ENCODE measurements at regions of chr10 and their contacts with region 1.

Region 1: GRCh38 chr10:29512425-29512974 is 122.3 kb downstream of the SVIL start:
- DNase-seq: no peak
- H3K4me3 Mint-ChIP-seq: no peak overlapping the region
- H3K27ac Mint-ChIP-seq: no peak overlapping the region
- H3K4me1 Mint-ChIP-seq: no peaks in the 10 kb centered on the region
- H3K27me3 Mint-ChIP-seq: no peaks in the 10 kb centered on the region

Region 2: GRCh38 chr10:29555746-29556481 is 43.4 kb after region 1 on chr10:
- CTCF ChIA-PET with region 1: no interaction called
- DNase-seq: no peak
- H3K4me3 Mint-ChIP-seq: no peak overlapping the region
- H3K27ac Mint-ChIP-seq: no peak overlapping the region
- H3K4me1 Mint-ChIP-seq: peaks cover 18% of the 10 kb centered on the region
- H3K27me3 Mint-ChIP-seq: no peaks in the 10 kb centered on the region

Region 3: DNA sequence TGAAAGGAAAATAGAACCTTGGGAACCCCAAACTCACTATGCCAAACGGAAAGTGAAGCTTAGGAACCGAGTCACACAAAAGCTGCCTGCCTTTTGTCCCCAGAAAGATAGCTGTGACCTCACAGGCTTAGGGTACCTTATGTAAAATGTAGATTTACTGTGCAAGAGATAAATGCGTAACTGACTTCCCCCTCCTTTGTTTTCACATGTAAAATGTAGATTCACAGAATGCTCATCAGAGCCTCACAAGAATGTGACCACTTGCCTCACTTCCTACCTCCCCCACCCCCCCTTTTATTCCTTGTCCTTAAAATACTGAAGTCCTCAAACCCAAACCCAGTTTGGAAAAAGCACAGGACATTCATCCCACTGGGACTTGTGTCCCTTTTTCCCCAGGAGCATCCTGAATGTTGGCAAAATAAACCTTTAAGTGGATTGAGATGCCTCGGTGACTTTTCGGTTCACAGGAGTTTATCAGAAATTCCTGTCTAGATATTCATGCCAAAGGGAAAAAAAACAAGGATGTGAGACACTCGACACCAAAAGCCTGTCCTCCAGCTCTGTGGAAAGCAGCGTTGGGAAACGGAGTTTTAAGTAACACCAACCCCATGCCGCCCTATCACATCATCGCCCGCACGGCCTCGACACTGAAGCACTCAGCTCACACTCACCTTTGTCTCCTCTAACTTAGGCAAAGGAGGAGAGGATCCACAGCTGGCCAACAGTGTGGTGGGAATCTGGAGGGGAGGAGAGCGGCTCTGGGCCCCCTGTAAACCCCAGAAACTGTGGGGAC is 76.3 kb after region 1 on chr10:
- CTCF ChIA-PET with region 1: interaction called, 14 read pairs
- DNase-seq: no peak
- H3K4me3 Mint-ChIP-seq: no peak overlapping the region
- H3K27ac Mint-ChIP-seq: no peak overlapping the region
- H3K4me1 Mint-ChIP-seq: peaks cover 8% of the 10 kb centered on the region
- H3K27me3 Mint-ChIP-seq: peaks cover 4% of the 10 kb centered on the region

Measured in activated naive CD4-positive, alpha-beta T cell treated with anti-CD3 and anti-CD28 coated beads, Interleukin-2, amount 10 ng/mL, durations not matched to agents 7 days and 5 days (primary cell).